ENCODE measurements at regions of chr3 and their contacts with region 1.

Region 1: DNA sequence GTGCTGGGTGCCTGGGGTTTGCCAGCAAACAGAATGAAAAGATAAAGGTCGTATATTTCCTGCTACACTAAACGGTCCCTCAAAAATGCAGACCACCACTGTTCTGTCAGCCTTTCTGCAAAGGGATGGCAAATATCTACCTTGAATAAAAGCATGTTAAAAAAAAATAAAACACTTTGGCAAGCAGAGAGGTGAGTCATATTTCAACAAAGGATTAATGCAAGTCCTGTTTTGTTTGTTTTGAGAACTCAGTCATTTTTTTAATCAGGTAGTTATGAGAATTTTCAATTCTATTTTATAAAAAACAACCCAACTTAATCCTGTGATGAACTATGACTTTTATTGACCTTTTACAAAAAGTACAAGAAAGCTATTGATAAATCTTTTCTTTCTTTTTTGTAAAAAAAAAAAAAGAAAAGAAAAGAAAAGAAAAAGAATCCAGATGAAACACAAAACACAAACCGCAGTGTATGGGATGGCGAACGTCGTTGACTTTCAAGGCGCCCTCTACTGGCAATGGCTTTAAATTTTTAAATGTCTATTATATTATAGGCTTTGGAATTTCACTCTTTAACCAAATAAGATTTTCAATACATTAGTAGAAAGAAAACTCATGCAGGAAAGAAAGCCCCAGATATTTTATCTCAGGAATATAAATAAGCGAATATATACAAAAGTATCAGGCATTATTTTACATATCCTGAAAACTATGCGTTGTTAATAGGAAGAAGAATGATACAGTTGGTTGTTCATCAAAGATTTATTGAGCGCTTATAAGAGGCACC is 87.8 kb downstream of the NCEH1 start:
- DNase-seq: peak in 1 of 2 experiments; percentile 44
- ATAC-seq: peak; percentile 56 to 76; a peak in 3 of 6 replicates
- H3K4me3 ChIP-seq: peak overlapping the region; percentile 63
- H3K27ac ChIP-seq: peak overlapping the region; percentile 89 to 97
- H3K4me1 ChIP-seq: peaks cover 40% of the 10 kb centered on the region
- CTCF ChIP-seq: peak; percentile 70
- EP300 ChIP-seq: no peak
- POLR2A ChIP-seq: no peak
- RAD21 ChIP-seq: peak in 1 of 2 experiments; percentile 34; a peak in 1 of 5 replicates

Region 2: GRCh38 chr3:172658344-172659245 is 35.5 kb after region 1 on chr3:
- CTCF ChIA-PET with region 1: interaction called, 11 read pairs
- POLR2A ChIA-PET with region 1: interaction called, 6 read pairs
- DNase-seq: peak; percentile 47 to 92
- ATAC-seq: peak; percentile 94 to 99
- H3K4me3 ChIP-seq: no peak overlapping the region
- H3K27ac ChIP-seq: peak overlapping the region; percentile 82 to 91
- H3K4me1 ChIP-seq: peaks cover 25% of the 10 kb centered on the region
- CTCF ChIP-seq: no peak
- EP300 ChIP-seq: peak in 1 of 2 experiments; percentile 26; a peak in 1 of 5 replicates
- POLR2A ChIP-seq: no peak
- RAD21 ChIP-seq: no peak